ENCODE measurements at regions of chr13 and their contacts with region 1.

Region 1: GRCh38 chr13:104442541-104442940 is 1376.3 kb upstream of the SLC10A2 start:
- DNase-seq: no peak
- ATAC-seq: no peak
- H3K4me3 ChIP-seq: no peak overlapping the region
- H3K4me3 Mint-ChIP-seq: no peak overlapping the region
- H3K27ac ChIP-seq: no peak overlapping the region
- H3K27ac Mint-ChIP-seq: no peak overlapping the region
- H3K4me1 ChIP-seq: no peaks in the 10 kb centered on the region
- H3K4me1 Mint-ChIP-seq: no peaks in the 10 kb centered on the region
- H3K27me3 ChIP-seq: no peaks in the 10 kb centered on the region
- H3K27me3 Mint-ChIP-seq: no peaks in the 10 kb centered on the region

Region 2: DNA sequence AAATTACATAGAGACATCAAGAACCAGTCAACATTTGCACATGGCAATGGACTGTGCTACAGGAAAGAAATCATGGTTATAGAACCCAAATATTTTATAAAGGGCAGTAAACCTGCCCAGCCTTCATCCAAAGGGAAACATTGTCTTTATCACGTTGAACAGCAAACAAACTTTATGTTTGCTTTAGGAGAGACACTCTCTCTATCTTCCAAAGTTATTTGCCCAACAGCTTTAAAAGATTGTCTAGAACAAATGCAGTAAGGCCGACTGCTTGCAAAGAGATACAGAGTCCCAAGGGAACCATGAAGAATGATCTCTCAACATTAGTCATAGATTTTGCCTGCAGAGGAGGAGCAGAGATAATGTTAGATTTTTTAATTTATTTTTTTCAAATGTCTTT is 52.9 kb before region 1 on chr13:
- CTCF ChIA-PET with region 1: no interaction called
- POLR2A ChIA-PET with region 1: no interaction called
- intact Hi-C with region 1: loop called in 1 of 2 experiments (anchors 1 kb)
- DNase-seq: no peak
- ATAC-seq: no peak
- H3K4me3 ChIP-seq: no peak overlapping the region
- H3K4me3 Mint-ChIP-seq: no peak overlapping the region
- H3K27ac ChIP-seq: no peak overlapping the region
- H3K27ac Mint-ChIP-seq: no peak overlapping the region
- H3K4me1 ChIP-seq: no peaks in the 10 kb centered on the region
- H3K4me1 Mint-ChIP-seq: no peaks in the 10 kb centered on the region
- H3K27me3 ChIP-seq: no peaks in the 10 kb centered on the region
- H3K27me3 Mint-ChIP-seq: no peaks in the 10 kb centered on the region

Measured in naive thymus-derived CD4-positive, alpha-beta T cell (primary cell).